BJ (cell line): ENCODE measurements at regions of chrX and their contacts with region 1.

Region 1: DNA sequence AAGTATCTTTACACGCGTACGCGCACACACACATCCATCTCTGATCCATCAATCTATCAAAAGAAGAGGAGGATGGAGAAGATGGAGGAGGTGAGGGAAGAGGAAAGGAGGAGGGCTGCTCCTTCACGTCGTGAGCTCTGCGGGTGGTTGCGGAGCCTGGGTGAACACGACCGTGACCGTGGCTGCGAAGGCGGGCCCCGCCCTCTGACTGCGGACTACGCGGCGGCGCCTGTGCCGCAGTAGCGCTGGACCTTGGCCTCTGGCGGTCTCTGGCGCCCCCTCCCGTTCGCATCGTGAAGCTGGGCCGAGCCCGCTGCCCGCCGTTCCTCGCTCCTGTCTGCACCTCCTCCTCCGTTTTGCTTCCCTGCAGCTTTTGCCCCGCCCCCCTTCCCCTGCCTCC is 37.7 kb upstream of the ARAF start:
- DNase-seq: no peak
- H3K4me3 ChIP-seq: peak overlapping the region; percentile 54
- H3K27me3 ChIP-seq: no peaks in the 10 kb centered on the region
- CTCF ChIP-seq: peak; percentile 75

Region 2: DNA sequence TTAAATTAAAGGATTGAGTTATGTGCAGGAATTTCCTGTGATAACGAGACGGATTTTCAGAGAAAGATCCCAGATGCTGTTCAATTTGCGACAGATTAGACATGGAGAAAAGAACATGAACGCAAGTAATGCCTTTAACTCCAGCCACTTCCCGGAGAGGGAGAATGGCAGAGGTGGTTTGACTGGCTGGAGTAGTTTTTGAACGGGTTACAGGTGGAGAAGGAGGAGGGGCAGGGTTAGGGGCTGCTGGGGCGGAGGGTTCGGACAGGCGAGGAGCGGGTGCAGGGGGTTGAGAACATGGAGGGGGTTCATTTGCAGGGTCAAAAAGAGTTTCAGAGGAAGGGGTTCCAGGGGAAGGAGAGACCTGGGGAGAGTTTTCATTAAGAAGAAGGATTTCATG is 231.0 kb before region 1 on chrX:
- CTCF ChIA-PET with region 1: no interaction called
- POLR2A ChIA-PET with region 1: no interaction called
- DNase-seq: no peak
- H3K4me3 ChIP-seq: no peak overlapping the region
- H3K27me3 ChIP-seq: no peaks in the 10 kb centered on the region
- CTCF ChIP-seq: no peak

Region 3: GRCh38 chrX:47475476-47475875 is 47.8 kb before region 1 on chrX:
- CTCF ChIA-PET with region 1: no interaction called
- POLR2A ChIA-PET with region 1: no interaction called
- DNase-seq: no peak
- H3K4me3 ChIP-seq: no peak overlapping the region
- H3K27me3 ChIP-seq: no peaks in the 10 kb centered on the region
- CTCF ChIP-seq: no peak

Region 4: GRCh38 chrX:47497273-47497672 is 26.0 kb before region 1 on chrX:
- CTCF ChIA-PET with region 1: interaction called, 32 read pairs
- POLR2A ChIA-PET with region 1: interaction called, 3 read pairs
- DNase-seq: no peak
- H3K4me3 ChIP-seq: no peak overlapping the region
- H3K27me3 ChIP-seq: no peaks in the 10 kb centered on the region
- CTCF ChIP-seq: peak; percentile 49